ENCODE measurements at regions of chr5 and their contacts with region 1.

Region 1: DNA sequence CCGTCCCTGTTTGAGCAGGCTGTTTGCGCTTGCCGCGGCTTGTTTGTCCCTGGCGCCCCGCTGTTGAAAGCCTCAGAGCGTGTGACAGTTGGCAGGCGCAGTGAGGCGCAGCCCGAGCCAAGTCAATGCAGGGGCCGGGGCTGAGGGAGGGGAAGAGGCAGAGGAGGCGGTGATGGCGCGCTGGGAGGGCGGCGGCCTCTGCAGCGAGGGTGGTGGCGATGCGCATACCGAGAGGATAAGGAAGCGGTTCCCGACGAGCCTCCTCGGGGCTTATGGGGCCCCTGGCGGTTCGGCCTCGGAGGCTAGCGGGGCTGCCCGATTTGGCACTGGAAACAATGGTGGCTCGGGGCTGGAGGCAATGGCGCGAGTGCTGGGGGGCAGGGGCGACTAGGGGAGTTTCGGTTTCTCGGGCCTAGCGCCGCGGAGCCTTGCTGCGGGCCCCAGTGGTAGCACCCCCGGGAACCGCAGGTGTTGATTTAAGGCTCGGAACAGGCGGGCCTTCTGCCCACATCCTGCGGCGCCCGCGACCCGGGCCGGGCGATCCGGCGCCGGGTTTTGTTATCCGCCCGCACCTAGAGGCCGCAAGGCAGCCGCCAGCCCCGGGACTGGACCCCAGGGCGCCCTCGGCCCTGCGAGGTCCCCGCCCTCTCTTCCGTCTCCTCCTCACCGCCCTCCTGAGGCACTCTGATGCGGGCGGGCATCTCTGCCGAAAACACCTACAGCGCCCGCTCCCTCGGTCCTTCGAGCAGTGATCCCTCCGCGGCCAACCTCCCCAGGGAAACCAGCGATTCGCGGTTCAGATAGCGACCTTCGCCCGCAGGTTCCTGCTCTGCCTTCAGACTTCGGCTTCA is 947 bp upstream of the LNPEP start:
- DNase-seq: peak; percentile 93
- H3K4me3 Mint-ChIP-seq: peak overlapping the region; percentile 85
- H3K27ac Mint-ChIP-seq: peak overlapping the region; percentile 99
- H3K4me1 Mint-ChIP-seq: peaks cover 51% of the 10 kb centered on the region
- H3K27me3 Mint-ChIP-seq: no peaks in the 10 kb centered on the region

Region 2: GRCh38 chr5:95870105-95870672 is 1064.7 kb before region 1 on chr5:
- CTCF ChIA-PET with region 1: interaction called, 4 read pairs
- intact Hi-C with region 1: loop called (anchors 1 kb)
- DNase-seq: peak; percentile 65
- H3K4me3 Mint-ChIP-seq: peak overlapping the region; percentile 68
- H3K27ac Mint-ChIP-seq: peak overlapping the region; percentile 99
- H3K4me1 Mint-ChIP-seq: peaks cover 59% of the 10 kb centered on the region
- H3K27me3 Mint-ChIP-seq: no peaks in the 10 kb centered on the region

Region 3: GRCh38 chr5:96752341-96753016 is 182.5 kb before region 1 on chr5:
- CTCF ChIA-PET with region 1: interaction called, 5 read pairs
- intact Hi-C with region 1: loop called (anchors 2 kb)
- DNase-seq: peak; percentile 54
- H3K4me3 Mint-ChIP-seq: no peak overlapping the region
- H3K27ac Mint-ChIP-seq: peak overlapping the region; percentile 25
- H3K4me1 Mint-ChIP-seq: peaks cover 25% of the 10 kb centered on the region
- H3K27me3 Mint-ChIP-seq: no peaks in the 10 kb centered on the region

Region 4: DNA sequence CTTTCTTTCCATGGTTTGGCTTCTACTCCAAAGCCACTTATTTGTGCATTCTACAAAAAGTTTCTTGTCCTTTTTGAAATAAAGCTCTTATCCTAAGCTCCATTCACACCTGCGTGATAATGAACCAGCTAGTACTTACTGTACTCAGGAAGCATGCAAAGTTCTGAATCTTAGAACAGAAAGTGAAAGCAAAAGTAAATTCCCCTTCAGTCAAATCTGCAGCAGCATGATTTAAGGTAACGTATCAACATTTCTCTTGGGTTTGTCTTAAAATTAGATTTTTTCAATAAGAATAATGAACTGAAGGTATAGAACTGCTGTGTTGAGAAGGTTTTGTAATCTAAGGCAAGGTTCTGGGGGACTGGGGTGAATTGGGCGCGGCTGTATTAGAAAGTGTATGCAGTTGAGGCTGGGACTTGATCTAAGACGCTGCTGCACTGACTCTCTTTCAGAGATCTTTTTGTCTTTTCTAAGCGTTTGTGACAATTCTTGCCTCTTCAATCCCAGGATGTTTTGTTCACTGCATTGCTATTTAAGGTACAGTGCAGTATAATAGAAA is 58.6 kb before region 1 on chr5 and contains the start of gene ERAP2:
- CTCF ChIA-PET with region 1: interaction called, 6 read pairs
- intact Hi-C with region 1: loop called (anchors 1 kb)
- DNase-seq: no peak
- H3K4me3 Mint-ChIP-seq: peak within 1 kb of the TSS; percentile 90
- H3K27ac Mint-ChIP-seq: peak within 1 kb of the TSS; percentile 95
- H3K4me1 Mint-ChIP-seq: peaks cover 68% of the 10 kb centered on the region
- H3K27me3 Mint-ChIP-seq: no peaks in the 10 kb centered on the region
- total RNA-seq, gene ERAP2: 108 to 111 TPM

Region 5: GRCh38 chr5:96919754-96920197 is 15.2 kb before region 1 on chr5:
- CTCF ChIA-PET with region 1: interaction called, 4 read pairs
- intact Hi-C with region 1: loop called (anchors 1 kb)
- DNase-seq: peak; percentile 67
- H3K4me3 Mint-ChIP-seq: no peak overlapping the region
- H3K27ac Mint-ChIP-seq: peak overlapping the region; percentile 56
- H3K4me1 Mint-ChIP-seq: peaks cover 59% of the 10 kb centered on the region
- H3K27me3 Mint-ChIP-seq: no peaks in the 10 kb centered on the region

Region 6: GRCh38 chr5:96963267-96963666 is 28.3 kb after region 1 on chr5:
- CTCF ChIA-PET with region 1: no interaction called
- intact Hi-C with region 1: loop called (anchors 1 kb)
- DNase-seq: peak; percentile 47
- H3K4me3 Mint-ChIP-seq: peak overlapping the region; percentile 69
- H3K27ac Mint-ChIP-seq: peak overlapping the region; percentile 95
- H3K4me1 Mint-ChIP-seq: peaks cover 73% of the 10 kb centered on the region
- H3K27me3 Mint-ChIP-seq: no peaks in the 10 kb centered on the region

Region 7: GRCh38 chr5:97183100-97183929 is 248.4 kb after region 1 on chr5 and contains the start of gene RIOK2:
- CTCF ChIA-PET with region 1: no interaction called
- intact Hi-C with region 1: loop called (anchors 1 kb)
- DNase-seq: peak; percentile 97
- H3K4me3 Mint-ChIP-seq: peak within 1 kb of the TSS; percentile 93
- H3K27ac Mint-ChIP-seq: peak within 1 kb of the TSS; percentile 99
- H3K4me1 Mint-ChIP-seq: peaks cover 33% of the 10 kb centered on the region
- H3K27me3 Mint-ChIP-seq: no peaks in the 10 kb centered on the region
- total RNA-seq, gene RIOK2: 29.1 to 32.0 TPM

Measured in activated naive CD4-positive, alpha-beta T cell treated with anti-CD3 and anti-CD28 coated beads for 36 hours (primary cell).